Right ventricle myocardium inferior (tissue), 1 donor: ENCODE measurements at regions of chr19 and their contacts with region 1.

Region 1: DNA sequence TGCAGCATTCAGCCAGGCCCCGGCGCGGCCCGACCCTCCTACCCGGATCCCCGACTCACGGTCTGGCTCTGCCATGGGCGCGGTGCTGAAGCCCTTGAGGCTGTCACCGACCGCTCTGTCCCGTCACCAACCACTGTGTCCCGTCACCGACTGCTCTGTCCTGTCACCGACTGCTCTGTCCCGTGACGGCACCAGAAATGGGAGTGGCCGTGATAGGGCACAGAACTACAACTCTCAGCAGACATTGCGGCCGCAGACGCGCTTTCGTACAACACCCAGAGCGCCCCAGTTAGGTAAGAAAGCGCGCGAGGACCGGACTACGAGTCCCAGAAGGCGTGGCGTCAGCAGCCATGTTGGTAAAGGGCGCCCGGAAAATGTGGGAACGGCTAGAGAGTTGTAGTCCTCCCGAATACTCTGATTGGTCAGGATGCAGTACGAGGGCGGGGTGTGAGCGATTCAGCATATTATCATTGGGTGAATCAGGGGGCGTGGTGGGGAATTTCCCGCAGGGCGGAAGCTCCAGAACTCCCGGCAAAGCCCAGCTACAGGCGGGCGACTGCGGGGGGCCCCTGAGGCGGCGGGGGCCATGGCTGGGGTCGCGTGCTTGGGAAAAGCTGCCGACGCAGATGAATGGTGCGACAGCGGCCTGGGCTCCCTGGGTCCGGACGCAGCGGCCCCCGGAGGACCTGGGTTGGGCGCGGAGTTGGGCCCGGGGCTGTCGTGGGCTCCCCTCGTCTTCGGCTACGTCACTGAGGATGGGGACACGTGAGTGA is at the starts of genes NFKBIB and SIRT2:
- DNase-seq: peak; percentile 100
- ATAC-seq: peak; percentile 99
- total RNA-seq, gene NFKBIB: 17.9 TPM
- total RNA-seq, gene SIRT2: 99.8 TPM

Region 2: DNA sequence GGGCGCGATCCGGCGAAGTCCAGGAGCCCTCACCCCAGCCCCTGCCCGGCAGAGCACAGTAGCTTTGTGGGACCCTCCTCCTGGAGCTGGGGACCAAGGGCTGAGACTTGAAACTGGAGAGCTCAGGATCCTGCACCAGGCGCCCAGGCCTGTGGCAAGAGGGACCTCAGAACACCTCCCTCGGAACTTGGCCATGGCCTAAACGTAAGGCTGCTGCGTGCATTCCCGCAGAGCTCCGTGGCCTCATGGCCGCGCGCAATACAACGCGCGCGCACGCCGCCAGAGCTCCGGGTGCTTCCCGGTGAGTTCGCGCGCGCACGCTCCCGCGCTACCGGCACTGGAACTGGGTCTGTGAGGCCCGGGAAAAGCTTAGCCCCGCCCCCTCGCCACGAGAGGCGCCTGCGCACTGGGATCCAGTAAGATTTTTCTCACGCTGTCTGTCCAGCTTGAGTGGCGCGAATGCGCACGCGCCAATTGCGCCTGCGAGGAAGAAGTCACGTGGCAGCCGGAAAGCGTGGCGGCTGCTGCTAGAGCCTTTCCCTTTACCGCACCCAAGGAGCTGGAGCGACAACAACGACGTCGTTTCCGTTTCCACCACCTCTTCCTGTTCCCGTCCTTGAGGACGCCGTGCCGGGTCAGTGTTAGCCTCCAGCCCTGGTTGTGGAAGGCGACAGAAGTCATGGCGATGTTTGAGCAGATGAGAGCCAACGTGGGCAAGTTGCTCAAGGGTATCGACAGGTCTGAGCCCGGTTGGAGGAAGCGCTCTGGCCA is 280.9 kb before region 1 on chr19 and contains the start of gene EIF3K:
- intact Hi-C with region 1: loop called (anchors 5 kb)
- DNase-seq: peak; percentile 100
- ATAC-seq: peak; percentile 96
- total RNA-seq, gene EIF3K: 660 TPM